ENCODE measurements at regions of chr20 and their contacts with region 1.

Region 1: DNA sequence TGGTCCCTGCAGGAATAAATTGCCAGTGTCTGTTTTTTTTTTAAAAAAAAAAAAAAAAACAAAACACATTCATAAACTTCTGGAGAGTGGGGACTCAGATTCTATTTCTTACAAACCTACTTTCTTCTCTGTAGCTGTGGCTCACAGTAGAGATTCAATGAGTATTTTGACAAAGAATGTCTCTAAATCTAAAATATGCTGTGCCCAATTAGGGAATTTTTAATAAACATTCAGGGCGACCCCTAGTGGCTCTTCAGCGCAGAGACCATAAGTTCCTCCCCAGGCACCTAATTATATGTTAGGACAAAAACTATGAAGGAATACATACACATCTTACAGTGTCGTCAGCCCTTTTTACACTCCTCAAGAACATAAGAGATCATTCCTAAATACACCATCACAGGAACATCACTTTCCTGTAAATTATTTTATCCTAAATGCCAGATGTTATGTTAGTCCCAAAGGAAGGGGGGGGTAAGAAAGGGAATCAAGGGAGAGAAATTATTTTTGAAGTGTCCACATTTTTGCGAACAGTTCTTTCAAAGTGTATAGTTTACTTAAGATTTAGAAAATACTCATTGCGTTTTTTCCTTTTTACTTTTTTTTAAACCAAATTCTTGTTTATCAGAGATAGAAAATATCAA is 21.8 kb upstream of the NAA20 start:
- DNase-seq: no peak
- ATAC-seq: peak; percentile 18 to 46
- H3K4me3 ChIP-seq: no peak overlapping the region
- H3K27ac ChIP-seq: no peak overlapping the region
- H3K4me1 ChIP-seq: peaks cover 16% of the 10 kb centered on the region
- H3K27me3 ChIP-seq: no peaks in the 10 kb centered on the region

Region 2: GRCh38 chr20:19779634-19780033 is 215.7 kb before region 1 on chr20:
- intact Hi-C with region 1: loop called in 3 of 4 experiments (anchors 2 to 10 kb)
- DNase-seq: no peak
- ATAC-seq: no peak
- H3K4me3 ChIP-seq: no peak overlapping the region
- H3K27ac ChIP-seq: peak overlapping the region; percentile 50
- H3K4me1 ChIP-seq: peaks cover 19% of the 10 kb centered on the region
- H3K27me3 ChIP-seq: no peaks in the 10 kb centered on the region

Region 3: GRCh38 chr20:19784511-19785172 is 210.7 kb before region 1 on chr20:
- intact Hi-C with region 1: loop called in 3 of 4 experiments (anchors 2 to 10 kb)
- DNase-seq: peak; percentile 44 to 75 (median 64)
- ATAC-seq: peak; percentile 76 to 81
- H3K4me3 ChIP-seq: no peak overlapping the region
- H3K27ac ChIP-seq: peak overlapping the region; percentile 91
- H3K4me1 ChIP-seq: peaks cover 16% of the 10 kb centered on the region
- H3K27me3 ChIP-seq: no peaks in the 10 kb centered on the region

Region 4: GRCh38 chr20:19934792-19935491 is 60.4 kb before region 1 on chr20:
- intact Hi-C with region 1: loop called in 1 of 4 experiments (anchors 10 kb)
- DNase-seq: peak; percentile 54 to 83 (median 76)
- ATAC-seq: peak; percentile 61 to 74
- H3K4me3 ChIP-seq: peak overlapping the region; percentile 40
- H3K27ac ChIP-seq: peak overlapping the region; percentile 95
- H3K4me1 ChIP-seq: peaks cover 15% of the 10 kb centered on the region
- H3K27me3 ChIP-seq: no peaks in the 10 kb centered on the region